Activated CD4-positive, alpha-beta T cell treated with anti-CD3 and anti-CD28 coated beads for 36 hours (primary cell): ENCODE measurements at regions of chr2 and their contacts with region 1.

Region 1: GRCh38 chr2:231786177-231786916 is at the start of gene COPS7B:
- DNase-seq: peak; percentile 93
- ATAC-seq: peak; percentile 67
- H3K4me3 Mint-ChIP-seq: peak within 1 kb of the TSS; percentile 93
- H3K27ac Mint-ChIP-seq: peak within 1 kb of the TSS; percentile 89
- H3K4me1 Mint-ChIP-seq: peaks cover 65% of the 10 kb centered on the region
- H3K27me3 Mint-ChIP-seq: no peaks in the 10 kb centered on the region
- total RNA-seq, gene COPS7B: 51.8 to 53.6 TPM

Region 2: GRCh38 chr2:231662028-231662810 is 124.1 kb before region 1 on chr2:
- CTCF ChIA-PET with region 1: no interaction called
- POLR2A ChIA-PET with region 1: no interaction called
- intact Hi-C with region 1: loop called (anchors 1 to 5 kb)
- DNase-seq: peak; percentile 98
- ATAC-seq: peak; percentile 92
- H3K4me3 Mint-ChIP-seq: peak overlapping the region; percentile 72
- H3K27ac Mint-ChIP-seq: peak overlapping the region; percentile 96
- H3K4me1 Mint-ChIP-seq: peaks cover 23% of the 10 kb centered on the region
- H3K27me3 Mint-ChIP-seq: no peaks in the 10 kb centered on the region

Region 3: GRCh38 chr2:231800493-231801091 is 14.2 kb after region 1 on chr2:
- CTCF ChIA-PET with region 1: interaction called, 10 read pairs
- POLR2A ChIA-PET with region 1: no interaction called
- intact Hi-C with region 1: no loop called
- DNase-seq: peak; percentile 78
- ATAC-seq: peak; percentile 69
- H3K4me3 Mint-ChIP-seq: no peak overlapping the region
- H3K27ac Mint-ChIP-seq: no peak overlapping the region
- H3K4me1 Mint-ChIP-seq: no peaks in the 10 kb centered on the region
- H3K27me3 Mint-ChIP-seq: no peaks in the 10 kb centered on the region

Region 4: DNA sequence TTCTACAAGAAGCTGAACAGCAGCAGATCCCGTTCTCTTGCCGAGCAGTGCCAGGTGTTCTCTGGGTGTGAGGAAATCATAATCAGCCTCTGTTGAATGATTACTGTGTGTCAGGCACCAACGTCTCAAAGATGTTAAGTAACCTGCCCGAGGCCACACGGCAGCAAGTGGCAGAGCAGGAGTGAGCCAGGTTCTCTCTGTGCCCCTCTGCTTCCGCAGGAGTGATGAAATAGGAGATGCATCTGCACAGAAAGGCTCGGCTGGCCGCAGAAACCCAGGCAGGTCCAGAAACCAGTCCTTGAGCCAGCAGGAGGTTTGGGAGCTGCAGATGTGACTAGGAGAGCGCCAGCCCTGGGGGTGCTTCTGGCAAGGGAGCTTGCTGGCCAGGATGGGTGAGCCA is 68.3 kb after region 1 on chr2:
- CTCF ChIA-PET with region 1: no interaction called
- POLR2A ChIA-PET with region 1: no interaction called
- intact Hi-C with region 1: no loop called
- DNase-seq: no peak
- ATAC-seq: no peak
- H3K4me3 Mint-ChIP-seq: no peak overlapping the region
- H3K27ac Mint-ChIP-seq: no peak overlapping the region
- H3K4me1 Mint-ChIP-seq: no peaks in the 10 kb centered on the region
- H3K27me3 Mint-ChIP-seq: peaks cover 6% of the 10 kb centered on the region

Region 5: DNA sequence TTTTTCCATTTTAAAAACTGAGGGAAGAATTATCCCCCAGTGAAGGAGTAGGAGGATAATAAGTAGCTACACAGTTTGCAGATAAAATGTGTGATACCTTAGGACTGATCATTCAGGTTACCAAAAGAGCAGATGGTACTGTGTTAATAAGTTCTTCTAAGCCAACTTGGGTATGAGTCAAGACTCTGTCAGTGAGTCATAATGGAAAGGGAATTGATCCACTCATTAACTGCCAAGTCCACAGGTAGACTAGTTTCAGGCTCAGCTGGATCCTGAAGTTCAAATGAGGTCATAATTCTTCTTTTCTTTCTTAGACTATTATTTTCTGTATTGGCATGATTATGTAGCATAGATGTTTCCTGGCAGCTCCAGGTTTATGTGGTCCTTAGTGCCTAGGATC is 449.9 kb after region 1 on chr2:
- CTCF ChIA-PET with region 1: no interaction called
- POLR2A ChIA-PET with region 1: no interaction called
- intact Hi-C with region 1: loop called in 1 of 2 experiments (anchors 5 kb)
- DNase-seq: no peak
- ATAC-seq: peak; percentile 69
- H3K4me3 Mint-ChIP-seq: no peak overlapping the region
- H3K27ac Mint-ChIP-seq: peak overlapping the region; percentile 58
- H3K4me1 Mint-ChIP-seq: peaks cover 64% of the 10 kb centered on the region
- H3K27me3 Mint-ChIP-seq: no peaks in the 10 kb centered on the region

Region 6: DNA sequence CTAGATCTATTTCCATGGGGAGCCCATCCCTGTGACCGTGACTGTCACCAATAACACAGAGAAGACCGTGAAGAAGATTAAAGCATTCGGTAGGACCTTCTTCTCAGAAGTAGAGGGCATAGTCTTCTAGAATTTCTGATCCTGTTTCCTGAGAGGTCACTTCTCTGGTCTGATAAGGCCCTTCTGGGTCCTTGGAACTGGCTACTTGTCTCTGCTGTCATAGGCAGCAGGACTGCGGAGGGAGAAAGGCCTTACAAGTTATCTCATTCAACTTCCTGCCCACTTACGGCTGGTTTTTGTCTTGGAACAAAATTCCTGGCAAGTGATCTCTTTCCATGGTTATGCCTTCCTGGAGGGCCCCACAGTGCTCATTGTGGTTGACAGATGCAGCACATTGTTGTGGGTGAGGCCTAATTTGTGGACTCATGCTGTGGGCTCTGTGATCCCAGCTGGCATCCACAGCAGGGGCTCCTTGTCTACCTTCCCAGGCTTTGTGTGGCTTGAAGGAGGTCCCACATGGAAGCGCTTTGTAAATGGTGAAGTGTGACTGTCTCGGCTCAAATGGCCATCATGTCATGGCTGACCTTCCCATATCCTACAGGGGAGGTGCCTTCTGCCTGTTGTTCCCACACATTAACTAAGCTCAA is 1543.3 kb after region 1 on chr2:
- CTCF ChIA-PET with region 1: no interaction called
- POLR2A ChIA-PET with region 1: no interaction called
- intact Hi-C with region 1: no loop called
- DNase-seq: no peak
- ATAC-seq: no peak
- H3K4me3 Mint-ChIP-seq: no peak overlapping the region
- H3K27ac Mint-ChIP-seq: no peak overlapping the region
- H3K4me1 Mint-ChIP-seq: peaks cover 29% of the 10 kb centered on the region
- H3K27me3 Mint-ChIP-seq: no peaks in the 10 kb centered on the region